Right ventricle myocardium superior (tissue), 1 donor: ENCODE measurements at regions of chr18 and their contacts with region 1.

Region 1: GRCh38 chr18:21704603-21705364 is at the start of gene ABHD3:
- DNase-seq: peak; percentile 97
- ATAC-seq: peak; percentile 100
- total RNA-seq, gene ABHD3: 5.0 TPM

Region 2: DNA sequence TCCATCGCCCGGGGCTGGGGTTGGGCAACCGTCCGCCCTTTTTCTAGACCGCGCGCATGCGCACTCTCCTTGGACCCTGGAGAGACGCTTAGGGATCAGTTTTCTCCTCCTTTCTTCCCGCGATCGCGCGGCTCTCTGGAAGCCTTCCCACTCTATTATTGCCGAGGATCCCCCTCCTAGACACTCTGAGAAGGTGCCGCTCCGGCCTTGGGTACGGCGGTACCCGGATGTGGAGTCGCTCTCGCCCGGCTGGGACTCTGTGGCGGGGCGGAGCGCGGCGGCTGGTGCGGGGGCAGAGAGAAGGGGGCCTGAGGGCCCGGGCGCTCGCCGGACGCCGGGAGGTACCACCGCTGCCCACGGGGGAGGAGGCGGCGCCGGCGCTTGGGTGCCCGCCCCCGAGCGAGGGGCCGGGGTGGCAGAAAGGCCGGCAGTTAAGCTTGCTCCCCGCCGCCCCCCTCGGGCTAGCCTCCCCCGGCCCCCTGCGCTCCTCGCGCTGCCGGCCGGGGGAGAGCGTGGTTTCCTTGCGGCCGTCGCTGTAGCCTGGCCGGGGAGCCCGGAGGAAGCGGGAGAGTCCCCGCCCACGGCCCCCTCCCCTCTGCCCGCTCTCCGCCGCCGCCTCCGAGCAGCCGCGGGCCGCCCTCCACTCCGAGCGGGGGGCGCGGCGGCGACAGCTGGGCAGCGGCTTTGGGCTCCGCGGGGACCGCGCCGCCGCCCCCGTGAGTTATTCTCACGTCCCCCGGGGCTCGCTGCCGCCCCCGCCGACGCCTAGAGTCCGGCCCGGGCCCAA is 36.1 kb after region 1 on chr18 and contains the start of gene MIB1:
- intact Hi-C with region 1: loop called (anchors 2 kb)
- DNase-seq: peak; percentile 71
- ATAC-seq: peak; percentile 90
- total RNA-seq, gene MIB1: 16.5 TPM